HEK293 (cell line): ENCODE measurements at regions of chr1 and their contacts with region 1.

Region 1: DNA sequence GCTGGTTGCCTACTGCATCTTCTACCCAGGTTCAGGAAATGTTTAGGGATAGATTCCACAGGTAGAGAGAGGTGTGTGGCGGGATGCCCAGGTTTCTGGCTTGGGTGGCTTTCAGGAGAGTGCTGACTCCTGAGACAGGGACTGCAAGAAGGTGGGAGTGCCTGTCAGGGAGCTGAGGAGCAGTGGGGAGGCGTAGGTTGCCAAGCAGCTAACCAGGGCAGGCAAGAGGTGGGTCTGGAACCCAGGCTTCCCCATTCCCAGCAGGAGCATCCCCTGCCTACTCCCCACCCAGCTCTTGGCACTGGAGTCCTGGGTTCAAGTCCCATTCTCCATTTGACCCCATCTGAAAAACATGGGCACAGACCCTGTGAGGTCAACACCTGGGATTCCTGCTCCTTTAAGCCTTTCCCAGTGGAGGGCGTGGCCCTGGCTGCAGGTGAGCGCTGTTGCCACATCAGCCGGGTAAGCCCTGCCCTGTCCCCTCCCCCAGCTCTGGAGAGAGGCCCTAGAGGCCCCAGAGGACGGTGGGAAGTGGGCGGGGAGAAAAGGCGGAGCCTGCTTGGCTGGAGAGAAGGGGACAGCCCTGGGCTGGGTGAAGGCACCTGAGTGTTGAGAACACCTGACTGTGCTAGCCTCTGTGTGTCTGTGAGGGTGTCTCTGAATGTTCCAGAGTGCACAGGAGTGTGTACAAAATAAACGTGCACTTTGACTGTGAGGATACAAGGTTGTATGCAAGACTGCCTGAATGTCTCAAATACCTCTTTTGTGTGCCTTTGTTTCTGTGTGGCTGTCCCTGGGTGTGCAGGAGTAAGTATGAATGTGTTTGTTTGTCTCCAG is 14.0 kb upstream of the SYNC start:
- H3K4me3 ChIP-seq: no peak overlapping the region
- H3K27ac ChIP-seq: peak overlapping the region; percentile 3; the same call in 1 of the 2 replicates
- H3K4me1 ChIP-seq: no peaks in the 10 kb centered on the region
- CTCF ChIP-seq: no peak

Region 2: GRCh38 chr1:32702599-32703478 is 13.7 kb before region 1 on chr1 and contains the start of gene SYNC:
- CTCF ChIA-PET with region 1: interaction called, 12 read pairs
- POLR2A ChIA-PET with region 1: interaction called, 8 read pairs
- H3K4me3 ChIP-seq: peak within 1 kb of the TSS; percentile 41
- H3K27ac ChIP-seq: peak within 1 kb of the TSS; percentile 40; the same call in 1 of the 2 replicates
- H3K4me1 ChIP-seq: peaks cover 7% of the 10 kb centered on the region
- CTCF ChIP-seq: no peak

Region 3: GRCh38 chr1:32743380-32744062 is 27.0 kb after region 1 on chr1:
- CTCF ChIA-PET with region 1: interaction called, 13 read pairs
- POLR2A ChIA-PET with region 1: interaction called, 9 read pairs
- H3K4me3 ChIP-seq: no peak overlapping the region
- H3K27ac ChIP-seq: no peak overlapping the region
- H3K4me1 ChIP-seq: no peaks in the 10 kb centered on the region; the same call in 1 of the 2 replicates
- CTCF ChIP-seq: no peak

Region 4: DNA sequence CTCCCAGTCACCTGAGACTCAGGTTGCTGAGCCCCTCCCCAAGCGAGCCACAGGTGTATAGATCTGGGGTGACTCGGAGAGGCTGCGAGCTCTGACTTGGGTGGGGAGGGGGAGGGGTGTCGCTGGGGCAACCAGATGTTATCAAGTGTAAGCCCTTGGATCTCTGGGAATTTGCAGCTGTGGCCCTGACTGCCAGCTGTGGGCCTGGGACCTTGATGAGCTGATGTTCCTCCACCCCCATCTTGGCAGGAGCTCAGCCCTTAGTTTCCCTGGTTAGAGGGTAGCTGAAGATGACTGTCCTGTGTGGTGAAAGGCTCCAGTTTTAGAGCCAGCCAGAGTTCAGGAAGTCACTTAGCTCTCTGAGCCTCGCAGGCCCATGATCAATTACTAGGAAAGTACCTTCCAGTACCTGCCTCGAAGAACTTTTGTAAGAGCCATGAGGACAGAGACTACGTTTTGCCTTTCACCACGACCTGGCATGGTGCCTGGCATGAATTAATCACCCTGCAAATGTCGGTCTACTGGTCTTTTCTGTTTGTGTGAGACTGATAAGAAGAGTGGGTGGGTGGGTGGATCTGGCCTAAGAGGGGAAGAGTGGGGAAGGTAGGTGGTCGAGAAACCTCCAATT is 44.8 kb after region 1 on chr1:
- CTCF ChIA-PET with region 1: interaction called, 16 read pairs
- POLR2A ChIA-PET with region 1: interaction called, 3 read pairs
- H3K4me3 ChIP-seq: no peak overlapping the region
- H3K27ac ChIP-seq: no peak overlapping the region
- H3K4me1 ChIP-seq: peaks cover 15% of the 10 kb centered on the region
- CTCF ChIP-seq: no peak

Region 5: DNA sequence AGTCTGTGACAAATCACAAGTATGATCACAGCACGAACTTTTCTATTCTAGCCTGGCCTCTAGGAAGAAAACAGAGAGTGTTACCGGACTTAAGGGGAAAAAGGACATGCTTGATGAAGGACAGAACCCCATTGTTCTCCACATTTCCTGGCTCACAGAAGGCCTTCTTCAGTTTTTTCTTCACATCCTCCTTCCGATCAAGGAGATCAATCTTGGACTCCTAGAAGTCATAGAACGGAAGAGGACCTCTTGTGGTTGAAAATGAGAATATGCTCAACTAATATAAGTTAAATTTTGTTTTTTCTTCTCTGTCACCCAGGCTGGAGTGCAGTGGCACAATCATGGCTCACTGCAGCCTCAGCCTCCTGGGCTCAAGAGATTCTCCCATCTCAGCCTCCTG is 70.3 kb after region 1 on chr1:
- CTCF ChIA-PET with region 1: interaction called, 16 read pairs
- POLR2A ChIA-PET with region 1: no interaction called
- H3K4me3 ChIP-seq: no peak overlapping the region
- H3K27ac ChIP-seq: no peak overlapping the region
- H3K4me1 ChIP-seq: no peaks in the 10 kb centered on the region
- CTCF ChIP-seq: no peak